IMR-90 (cell line): ENCODE measurements at regions of chr6 and their contacts with region 1.

Region 1: GRCh38 chr6:44010411-44011349 is 116.6 kb downstream of the MRPL14 start:
- DNase-seq: peak; percentile 100
- ATAC-seq: peak; percentile 86
- H3K4me3 ChIP-seq: no peak overlapping the region
- H3K27ac ChIP-seq: peak overlapping the region; percentile 81
- H3K4me1 ChIP-seq: peaks cover 24% of the 10 kb centered on the region
- H3K27me3 ChIP-seq: no peaks in the 10 kb centered on the region
- CTCF ChIP-seq: no peak
- POLR2A ChIP-seq: peak; percentile 81; the same call in 1 of the 2 replicates
- RAD21 ChIP-seq: peak; percentile 36

Region 2: GRCh38 chr6:43842231-43842794 is 168.4 kb before region 1 on chr6:
- CTCF ChIA-PET with region 1: no interaction called
- POLR2A ChIA-PET with region 1: no interaction called
- dilution Hi-C with region 1: no loop called
- in situ Hi-C with region 1: no loop called
- intact Hi-C with region 1: no loop called
- DNase-seq: peak; percentile 72
- ATAC-seq: peak; percentile 15; the same call in 1 of the 2 replicates
- H3K4me3 ChIP-seq: no peak overlapping the region
- H3K27ac ChIP-seq: no peak overlapping the region
- H3K4me1 ChIP-seq: peaks cover 24% of the 10 kb centered on the region
- H3K27me3 ChIP-seq: peaks cover 20% of the 10 kb centered on the region
- CTCF ChIP-seq: no peak
- POLR2A ChIP-seq: no peak
- RAD21 ChIP-seq: no peak

Region 3: DNA sequence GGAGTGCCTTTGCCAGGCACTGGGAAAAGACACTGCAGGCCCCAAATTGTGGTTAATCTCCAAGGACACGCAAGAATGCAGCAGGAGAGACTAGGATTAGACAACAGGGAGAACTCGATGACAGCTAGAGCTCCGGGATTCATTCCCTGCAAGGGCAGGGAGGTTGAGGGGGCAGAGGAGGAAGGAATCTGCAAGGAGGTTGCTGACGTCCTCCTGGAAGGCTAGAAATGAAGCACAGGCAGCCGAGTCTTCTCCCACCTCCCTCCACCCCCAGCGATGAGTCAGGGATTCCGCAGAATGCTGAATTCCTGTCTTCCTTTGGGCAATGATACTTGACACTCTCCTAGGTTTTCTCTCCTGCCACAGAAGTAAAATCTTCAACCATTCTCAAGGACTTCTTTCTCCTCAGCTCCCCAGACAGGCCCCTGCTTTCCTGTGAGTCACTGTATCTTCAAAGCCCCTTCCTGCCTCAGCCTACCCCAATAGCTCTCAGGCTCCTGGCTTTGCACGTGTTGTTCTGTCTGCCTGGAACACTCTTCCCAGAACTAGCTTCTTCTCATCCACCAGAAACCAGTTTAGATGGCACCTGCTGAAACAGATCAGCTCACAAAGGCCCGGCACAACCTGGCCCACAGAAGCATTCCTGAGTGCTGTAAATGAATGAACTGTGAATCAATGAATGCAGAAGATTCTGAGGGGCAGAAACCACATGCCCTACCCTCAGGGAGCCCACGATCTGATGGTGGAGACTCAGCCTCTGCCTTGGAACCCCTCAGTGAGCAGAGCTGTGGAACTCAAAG is 31.0 kb after region 1 on chr6:
- CTCF ChIA-PET with region 1: interaction called, 4 read pairs
- POLR2A ChIA-PET with region 1: no interaction called
- dilution Hi-C with region 1: no loop called
- in situ Hi-C with region 1: no loop called
- intact Hi-C with region 1: loop called (anchors 2 kb)
- DNase-seq: peak; percentile 99
- ATAC-seq: peak; percentile 85
- H3K4me3 ChIP-seq: no peak overlapping the region
- H3K27ac ChIP-seq: peak overlapping the region; percentile 95
- H3K4me1 ChIP-seq: peaks cover 36% of the 10 kb centered on the region
- H3K27me3 ChIP-seq: no peaks in the 10 kb centered on the region
- CTCF ChIP-seq: no peak
- POLR2A ChIP-seq: peak; percentile 52; the same call in 1 of the 2 replicates
- RAD21 ChIP-seq: no peak; the same call in 1 of the 2 replicates

Region 4: DNA sequence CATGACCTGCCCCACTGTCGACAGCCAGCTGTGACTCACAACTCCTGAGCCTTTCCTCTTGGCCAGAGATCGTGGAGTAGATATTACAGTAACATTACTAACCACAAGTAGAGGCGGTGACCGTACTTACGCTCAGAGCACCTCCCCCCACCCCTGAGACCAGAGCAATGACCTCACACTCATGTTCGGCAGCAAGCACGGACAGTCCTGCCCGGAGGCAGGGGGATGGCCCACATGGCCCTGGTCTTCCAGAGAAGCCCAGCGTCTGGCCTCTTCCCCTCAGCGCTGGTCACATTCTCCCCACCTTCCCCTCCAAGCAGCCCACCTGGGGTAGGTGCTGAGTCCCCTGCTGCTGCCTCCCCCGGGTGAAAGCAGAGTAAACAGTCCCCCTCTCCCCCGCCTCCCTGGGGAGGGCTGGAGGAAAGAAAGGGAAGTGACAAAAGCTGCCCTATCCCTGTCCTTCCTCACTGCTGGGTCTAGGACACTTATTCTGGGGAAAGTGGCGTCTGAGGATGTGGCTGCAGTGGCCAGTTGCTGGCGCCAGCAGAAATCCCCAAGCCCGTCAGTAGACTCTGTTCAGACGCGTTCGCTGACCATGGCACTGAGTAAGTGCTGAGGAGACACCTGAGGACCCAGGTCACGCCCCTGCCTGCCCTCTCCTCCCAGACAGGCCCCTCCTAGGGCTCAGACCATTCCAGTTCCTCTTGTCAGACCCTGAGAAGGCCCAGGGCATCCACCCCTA is 48.1 kb after region 1 on chr6:
- CTCF ChIA-PET with region 1: no interaction called
- POLR2A ChIA-PET with region 1: no interaction called
- dilution Hi-C with region 1: no loop called
- in situ Hi-C with region 1: no loop called
- intact Hi-C with region 1: loop called (anchors 5 kb)
- DNase-seq: peak; percentile 100
- ATAC-seq: peak; percentile 83
- H3K4me3 ChIP-seq: no peak overlapping the region
- H3K27ac ChIP-seq: peak overlapping the region; percentile 91
- H3K4me1 ChIP-seq: peaks cover 61% of the 10 kb centered on the region
- H3K27me3 ChIP-seq: no peaks in the 10 kb centered on the region
- CTCF ChIP-seq: no peak
- POLR2A ChIP-seq: peak; percentile 70
- RAD21 ChIP-seq: peak; percentile 29